ENCODE measurements at regions of chr2 and their contacts with region 1.

Region 1: DNA sequence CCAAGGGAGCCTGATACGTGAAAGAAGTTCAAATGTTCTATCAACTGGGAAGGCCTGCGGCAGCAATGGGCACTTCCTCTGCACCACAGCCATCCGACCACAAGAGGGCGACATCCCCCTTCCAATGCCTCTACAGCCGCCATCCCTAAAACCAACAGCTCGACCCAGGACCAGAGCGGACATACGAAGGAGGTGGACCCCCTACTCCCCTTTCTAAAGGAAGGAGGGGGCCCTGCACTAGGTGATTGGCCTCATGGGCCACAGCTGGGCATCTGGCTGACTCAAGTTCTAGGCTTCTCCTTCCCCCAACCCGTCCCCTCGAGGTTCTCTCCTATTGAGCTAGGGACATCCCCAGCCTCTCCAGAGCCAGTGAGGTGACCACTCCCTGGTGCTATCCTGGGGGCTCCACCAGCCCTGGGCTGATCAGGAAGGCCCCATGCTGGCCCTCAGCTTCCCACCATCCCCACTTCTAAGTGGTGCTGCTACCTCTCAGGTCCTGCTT is 217.2 kb downstream of the TNS1 start:
- DNase-seq: peak; percentile 66
- H3K4me3 ChIP-seq: no peak overlapping the region
- H3K27ac ChIP-seq: no peak overlapping the region
- H3K4me1 ChIP-seq: no peaks in the 10 kb centered on the region
- H3K27me3 ChIP-seq: no peaks in the 10 kb centered on the region
- CTCF ChIP-seq: peak; percentile 95

Region 2: DNA sequence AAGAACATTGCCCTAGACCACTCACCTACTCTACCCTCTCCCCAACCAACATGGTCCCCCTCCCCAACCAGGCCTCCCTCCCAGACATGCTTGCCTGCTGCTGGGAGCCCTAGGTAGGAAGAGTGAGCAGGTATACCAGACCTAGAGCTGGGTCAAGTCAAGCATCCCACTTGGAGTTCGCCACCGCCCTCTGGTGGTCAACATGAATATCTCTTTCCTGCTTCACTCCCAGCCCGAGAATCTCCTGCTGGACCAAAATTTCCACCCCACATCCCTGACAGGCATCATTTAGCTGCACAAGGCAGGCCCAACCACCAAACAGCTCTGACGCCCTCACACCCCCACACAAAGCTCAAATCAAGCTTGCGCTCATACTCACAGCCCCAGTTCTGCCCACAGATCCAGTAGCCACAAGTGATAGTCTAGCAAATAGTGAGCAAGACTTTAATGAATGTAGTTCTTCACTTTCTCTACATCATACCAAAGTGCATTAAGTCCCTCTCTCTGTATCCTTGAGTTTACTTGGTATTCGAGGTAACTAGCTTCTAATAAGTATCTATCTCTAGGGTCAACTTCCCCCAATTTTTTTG is 101.2 kb after region 1 on chr2:
- CTCF ChIA-PET with region 1: interaction called, 14 read pairs
- POLR2A ChIA-PET with region 1: no interaction called
- intact Hi-C with region 1: loop called (anchors 1 kb)
- DNase-seq: peak; percentile 74
- H3K4me3 ChIP-seq: no peak overlapping the region
- H3K27ac ChIP-seq: no peak overlapping the region
- H3K4me1 ChIP-seq: no peaks in the 10 kb centered on the region
- H3K27me3 ChIP-seq: no peaks in the 10 kb centered on the region
- CTCF ChIP-seq: peak; percentile 80

Region 3: DNA sequence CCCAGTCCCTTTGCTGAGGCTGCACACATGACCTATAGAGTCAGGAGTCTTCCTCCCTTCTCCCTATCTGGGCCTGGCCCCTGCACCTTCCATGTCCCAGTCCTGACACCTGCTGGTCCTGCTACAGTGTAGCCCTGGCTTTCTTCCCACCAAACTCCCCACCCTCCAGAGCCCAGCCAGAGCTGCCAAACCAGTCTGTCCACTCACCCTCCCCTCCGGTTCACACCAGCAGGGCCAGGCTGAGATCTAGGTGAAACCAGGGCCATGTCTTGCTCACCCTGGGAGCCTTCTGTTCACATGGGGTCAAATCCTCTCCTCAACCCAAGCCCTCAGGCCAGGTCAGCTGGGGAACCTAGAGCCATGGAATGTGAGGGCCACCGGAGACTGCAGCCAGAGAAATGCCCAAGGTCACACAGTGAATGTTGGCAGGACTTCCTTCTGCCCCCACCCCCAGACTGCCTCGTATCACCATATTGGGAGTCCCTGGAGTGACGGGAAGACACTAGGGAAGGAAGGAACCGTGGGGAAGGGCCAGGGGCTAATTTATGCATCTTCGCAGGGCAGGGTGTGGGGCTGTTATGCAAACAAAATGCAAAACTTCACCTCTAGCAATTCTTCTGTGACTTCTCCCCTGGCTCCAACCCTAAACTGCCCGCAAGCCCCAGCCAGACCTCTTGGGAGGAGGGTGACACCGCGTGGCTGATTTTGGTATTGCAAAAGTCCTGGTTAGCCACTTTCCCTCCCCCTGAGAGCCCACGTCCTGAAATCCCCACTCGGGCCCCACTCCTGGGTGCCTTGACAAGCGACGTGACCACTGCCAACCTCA is 202.6 kb after region 1 on chr2:
- CTCF ChIA-PET with region 1: interaction called, 6 read pairs
- POLR2A ChIA-PET with region 1: no interaction called
- intact Hi-C with region 1: loop called (anchors 1 kb)
- DNase-seq: peak; percentile 73
- H3K4me3 ChIP-seq: no peak overlapping the region
- H3K27ac ChIP-seq: no peak overlapping the region
- H3K4me1 ChIP-seq: no peaks in the 10 kb centered on the region
- H3K27me3 ChIP-seq: no peaks in the 10 kb centered on the region
- CTCF ChIP-seq: peak; percentile 85

Region 4: DNA sequence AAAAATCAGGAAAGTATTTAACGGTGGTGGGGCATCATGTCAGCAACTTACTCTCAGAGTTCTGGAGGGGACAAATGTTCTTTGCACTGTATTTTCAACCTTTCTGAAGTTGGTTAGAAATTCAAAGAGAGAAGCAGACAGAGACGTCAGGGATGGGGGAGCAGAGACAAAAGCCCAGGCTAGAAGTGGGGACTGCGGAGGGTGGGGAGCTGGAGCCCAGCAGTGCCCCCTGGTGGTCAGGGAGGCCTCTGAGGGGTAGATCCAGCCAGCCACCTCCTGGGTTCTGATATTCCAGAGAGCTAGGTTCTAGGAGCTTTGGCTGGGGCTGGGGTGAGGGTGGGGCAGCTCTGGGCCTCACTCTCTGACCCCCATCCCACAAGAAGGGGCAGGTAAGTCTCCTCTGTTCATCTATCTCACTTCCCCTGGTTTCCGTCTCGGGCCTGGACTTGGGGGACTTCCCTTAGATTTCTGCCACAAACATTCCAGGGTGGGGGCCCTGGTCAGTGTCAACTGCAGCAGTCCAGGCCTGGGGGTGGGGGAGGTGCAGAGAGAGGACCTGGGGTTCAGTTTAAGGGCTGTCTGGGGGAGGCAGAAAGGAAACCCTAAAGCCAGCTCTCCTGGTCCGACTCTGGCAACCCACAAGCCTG is 208.3 kb after region 1 on chr2:
- CTCF ChIA-PET with region 1: interaction called, 13 read pairs
- POLR2A ChIA-PET with region 1: no interaction called
- intact Hi-C with region 1: no loop called
- DNase-seq: peak; percentile 69
- H3K4me3 ChIP-seq: no peak overlapping the region
- H3K27ac ChIP-seq: no peak overlapping the region
- H3K4me1 ChIP-seq: peaks cover 11% of the 10 kb centered on the region
- H3K27me3 ChIP-seq: no peaks in the 10 kb centered on the region
- CTCF ChIP-seq: peak; percentile 89

Region 5: DNA sequence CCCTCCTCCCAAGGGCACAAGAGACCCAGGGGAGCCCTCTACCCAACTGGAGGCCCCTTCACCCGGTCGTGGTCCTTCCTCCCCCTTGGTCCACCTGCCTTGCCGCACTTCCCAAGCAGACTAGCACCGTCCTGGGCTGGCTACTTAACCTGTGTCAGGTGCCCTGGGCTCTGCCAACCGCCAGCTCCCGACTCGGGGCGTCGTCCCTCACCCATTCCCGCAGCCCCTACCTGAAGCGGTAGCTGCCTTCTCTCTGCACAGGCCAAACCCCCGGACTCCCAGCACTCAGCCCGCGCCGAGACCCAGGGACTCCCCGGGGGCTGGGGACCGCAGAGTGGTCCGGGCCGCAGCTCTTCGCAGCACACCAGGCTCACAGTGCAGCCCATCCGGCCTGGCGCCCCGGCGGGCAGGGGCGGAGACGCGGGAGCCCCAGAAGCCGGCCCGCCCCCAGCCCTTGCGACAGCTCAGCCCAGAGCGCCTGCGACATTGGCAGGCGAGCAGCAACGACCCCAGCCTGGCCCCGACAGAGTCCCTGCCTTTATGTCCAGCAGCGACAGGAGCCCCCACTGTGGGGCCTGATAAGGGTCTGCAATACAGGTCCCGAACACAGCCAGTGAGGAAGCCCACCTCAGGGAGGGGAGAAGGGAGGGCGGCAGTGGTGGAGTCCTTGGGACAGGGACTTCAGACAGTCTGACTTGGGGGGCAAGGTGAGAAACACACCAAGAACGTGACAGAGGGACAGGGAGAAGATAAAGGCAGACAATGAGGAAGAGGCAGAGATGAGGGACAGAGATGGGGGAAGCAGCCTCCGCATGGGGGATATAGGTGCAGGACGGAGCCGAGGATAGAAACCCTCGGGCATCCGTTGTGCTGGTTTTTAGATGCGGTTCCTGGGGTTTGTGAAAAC is 248.2 kb after region 1 on chr2:
- CTCF ChIA-PET with region 1: interaction called, 9 read pairs
- POLR2A ChIA-PET with region 1: no interaction called
- intact Hi-C with region 1: loop called (anchors 1 kb)
- DNase-seq: peak; percentile 45
- H3K4me3 ChIP-seq: peak overlapping the region; percentile 40
- H3K27ac ChIP-seq: no peak overlapping the region
- H3K4me1 ChIP-seq: peaks cover 12% of the 10 kb centered on the region
- H3K27me3 ChIP-seq: peaks cover 4% of the 10 kb centered on the region
- CTCF ChIP-seq: no peak

Region 6: DNA sequence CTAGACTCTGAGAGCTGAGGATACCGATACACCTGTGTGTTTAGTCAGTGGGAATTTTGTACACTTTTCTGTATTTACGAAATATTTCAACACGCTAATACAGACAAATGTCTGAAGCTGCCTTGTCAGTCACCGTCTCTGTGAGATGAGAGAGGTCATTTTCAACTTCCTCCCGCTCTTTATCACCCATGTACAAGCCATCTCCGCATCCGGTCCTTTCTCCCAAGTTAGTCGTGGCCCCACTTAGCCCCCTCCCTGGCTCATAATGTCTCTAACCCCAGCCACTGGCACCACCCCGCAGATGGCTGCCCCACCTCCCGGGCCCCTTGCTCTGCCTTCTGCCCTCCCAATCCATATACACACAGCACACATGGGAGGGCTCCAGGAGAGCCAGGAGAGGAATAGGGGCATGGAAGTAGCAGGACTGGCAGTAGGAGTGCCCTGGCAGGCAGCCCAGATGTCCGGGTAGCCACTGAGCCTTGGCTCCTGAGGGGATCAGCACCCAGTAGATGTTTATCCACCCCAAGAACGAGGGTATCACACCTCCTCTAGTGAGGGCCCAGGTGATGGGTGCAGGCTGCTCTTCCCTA is 281.4 kb after region 1 on chr2:
- CTCF ChIA-PET with region 1: interaction called, 9 read pairs
- POLR2A ChIA-PET with region 1: no interaction called
- intact Hi-C with region 1: loop called (anchors 1 kb)
- DNase-seq: no peak
- H3K4me3 ChIP-seq: no peak overlapping the region
- H3K27ac ChIP-seq: no peak overlapping the region
- H3K4me1 ChIP-seq: no peaks in the 10 kb centered on the region
- H3K27me3 ChIP-seq: no peaks in the 10 kb centered on the region
- CTCF ChIP-seq: no peak

Region 7: DNA sequence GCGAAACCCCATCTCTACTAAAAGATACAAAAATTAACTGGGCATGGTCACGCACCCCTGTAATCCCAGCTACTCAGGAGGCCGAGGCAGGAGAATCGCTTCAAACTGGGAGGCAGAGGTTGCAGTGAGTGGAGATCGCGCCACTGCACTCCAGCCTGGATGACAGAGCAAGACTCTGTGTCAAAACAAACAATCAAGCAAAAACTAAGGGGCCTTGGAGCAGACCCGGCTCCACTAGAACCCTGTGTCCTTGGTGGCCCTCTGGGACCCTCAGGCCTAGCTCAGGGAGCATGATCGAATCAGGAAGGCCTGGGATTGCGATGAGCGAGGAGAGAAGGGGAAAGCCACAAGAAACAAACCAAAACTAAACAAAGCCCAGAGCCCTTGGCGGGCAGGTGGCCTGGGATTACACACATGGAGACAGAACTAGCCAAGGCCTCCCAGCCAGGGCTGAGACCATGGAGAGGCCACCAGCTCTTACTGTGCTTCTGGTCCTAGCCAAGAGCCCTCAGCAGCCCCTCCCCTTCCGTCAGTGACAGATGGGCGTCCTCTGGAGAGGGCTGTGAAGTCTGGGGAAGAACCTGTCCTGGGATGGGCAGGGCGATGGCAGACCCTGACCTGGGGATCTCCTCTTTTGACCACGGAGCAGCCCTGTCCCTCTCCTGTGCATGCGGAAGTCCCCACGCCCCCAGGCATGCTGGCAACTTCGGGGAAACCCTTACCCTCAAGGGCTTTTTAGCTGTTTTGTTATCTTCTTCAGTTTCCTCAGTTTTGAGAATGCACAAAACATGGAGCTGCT is 543.6 kb after region 1 on chr2:
- CTCF ChIA-PET with region 1: no interaction called
- POLR2A ChIA-PET with region 1: no interaction called
- intact Hi-C with region 1: no loop called
- DNase-seq: no peak
- H3K4me3 ChIP-seq: no peak overlapping the region
- H3K27ac ChIP-seq: no peak overlapping the region
- H3K4me1 ChIP-seq: peaks cover 3% of the 10 kb centered on the region
- H3K27me3 ChIP-seq: no peaks in the 10 kb centered on the region
- CTCF ChIP-seq: no peak

Measured in A673 (cell line).